Activated naive CD4-positive, alpha-beta T cell treated with anti-CD3 and anti-CD28 coated beads for 36 hours (primary cell): ENCODE measurements at regions of chr21 and their contacts with region 1.

Region 1: DNA sequence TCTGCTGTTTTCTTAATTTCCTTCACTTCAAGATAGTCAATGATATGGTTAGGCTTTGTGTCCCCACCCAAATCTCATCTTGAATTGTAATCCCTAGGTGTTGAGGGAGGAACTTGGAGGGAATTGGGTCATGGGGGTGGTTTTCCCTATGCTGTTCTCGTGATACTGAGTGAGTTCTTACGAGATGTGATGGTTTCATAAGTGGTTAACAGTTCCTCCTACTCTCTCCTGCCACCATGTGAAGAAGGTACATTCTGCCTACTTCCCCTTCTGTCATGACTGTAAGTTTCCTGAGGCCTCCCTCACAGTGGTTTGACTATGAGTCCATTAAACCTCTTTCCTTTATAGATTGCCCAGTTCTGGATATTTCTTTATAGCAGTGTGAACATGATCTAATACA is 74.0 kb upstream of the SAMSN1 start:
- DNase-seq: peak; percentile 30
- H3K4me3 Mint-ChIP-seq: no peak overlapping the region
- H3K27ac Mint-ChIP-seq: peak overlapping the region; percentile 25
- H3K4me1 Mint-ChIP-seq: peaks cover 27% of the 10 kb centered on the region
- H3K27me3 Mint-ChIP-seq: no peaks in the 10 kb centered on the region

Region 2: GRCh38 chr21:14523234-14523633 is 96.9 kb before region 1 on chr21:
- CTCF ChIA-PET with region 1: interaction called, 3 read pairs
- intact Hi-C with region 1: loop called (anchors 1 kb)
- DNase-seq: peak; percentile 51
- H3K4me3 Mint-ChIP-seq: peak overlapping the region; percentile 55
- H3K27ac Mint-ChIP-seq: peak overlapping the region; percentile 68
- H3K4me1 Mint-ChIP-seq: peaks cover 53% of the 10 kb centered on the region
- H3K27me3 Mint-ChIP-seq: no peaks in the 10 kb centered on the region

Region 3: GRCh38 chr21:14591882-14592281 is 28.3 kb before region 1 on chr21:
- CTCF ChIA-PET with region 1: no interaction called
- intact Hi-C with region 1: loop called (anchors 2 kb)
- DNase-seq: no peak
- H3K4me3 Mint-ChIP-seq: no peak overlapping the region
- H3K27ac Mint-ChIP-seq: no peak overlapping the region
- H3K4me1 Mint-ChIP-seq: peaks cover 19% of the 10 kb centered on the region
- H3K27me3 Mint-ChIP-seq: no peaks in the 10 kb centered on the region

Region 4: GRCh38 chr21:14602382-14602958 is 17.7 kb before region 1 on chr21:
- CTCF ChIA-PET with region 1: interaction called, 3 read pairs
- intact Hi-C with region 1: loop called (anchors 2 kb)
- DNase-seq: no peak
- H3K4me3 Mint-ChIP-seq: no peak overlapping the region
- H3K27ac Mint-ChIP-seq: no peak overlapping the region
- H3K4me1 Mint-ChIP-seq: peaks cover 24% of the 10 kb centered on the region
- H3K27me3 Mint-ChIP-seq: no peaks in the 10 kb centered on the region

Region 5: GRCh38 chr21:14630556-14631069 is 10.5 kb after region 1 on chr21:
- CTCF ChIA-PET with region 1: no interaction called
- intact Hi-C with region 1: loop called (anchors 1 kb)
- DNase-seq: no peak
- H3K4me3 Mint-ChIP-seq: no peak overlapping the region
- H3K27ac Mint-ChIP-seq: peak overlapping the region; percentile 65
- H3K4me1 Mint-ChIP-seq: peaks cover 19% of the 10 kb centered on the region
- H3K27me3 Mint-ChIP-seq: no peaks in the 10 kb centered on the region

Region 6: DNA sequence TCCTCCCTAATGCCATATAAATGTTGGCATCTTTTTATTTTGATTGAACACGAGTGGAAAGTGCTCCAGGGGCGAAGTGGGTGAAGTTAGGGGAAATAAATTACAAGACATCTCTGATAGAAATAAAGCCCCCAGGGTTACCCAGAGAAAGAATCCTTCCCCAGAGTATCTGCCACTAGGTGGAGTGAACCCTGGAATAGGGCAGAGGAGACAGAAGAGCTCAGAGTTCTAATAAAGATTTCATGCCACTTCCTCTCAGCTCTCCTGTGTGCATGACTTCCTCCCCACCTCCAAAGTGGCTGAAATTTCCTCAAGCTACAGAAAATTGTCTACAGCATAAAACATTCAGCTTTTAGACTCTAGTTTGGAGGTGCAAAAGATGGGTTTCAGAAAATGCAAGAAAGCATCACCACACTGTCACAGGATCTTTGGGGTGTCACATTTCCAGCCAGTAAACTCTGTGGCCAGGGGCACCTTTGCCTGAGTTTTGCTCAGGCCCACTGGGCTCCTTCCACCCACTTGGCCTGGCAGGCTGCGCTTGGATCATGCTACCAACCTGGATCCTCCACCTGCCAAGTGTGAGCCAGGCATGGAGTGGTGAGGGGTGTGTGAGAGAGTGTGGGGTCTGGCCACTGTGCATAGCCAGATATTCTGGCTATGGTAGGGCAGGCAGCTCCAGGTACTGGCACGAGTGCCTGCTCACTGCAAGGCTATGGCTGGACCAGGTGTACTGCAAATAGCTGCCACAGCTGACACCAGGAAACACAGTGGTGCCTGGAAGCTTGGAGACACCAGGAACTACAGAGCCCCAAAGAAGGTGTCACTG is 900.9 kb after region 1 on chr21:
- CTCF ChIA-PET with region 1: no interaction called
- intact Hi-C with region 1: loop called (anchors 10 kb)
- DNase-seq: no peak
- H3K4me3 Mint-ChIP-seq: no peak overlapping the region
- H3K27ac Mint-ChIP-seq: no peak overlapping the region
- H3K4me1 Mint-ChIP-seq: peaks cover 39% of the 10 kb centered on the region
- H3K27me3 Mint-ChIP-seq: no peaks in the 10 kb centered on the region